Psoas muscle (tissue), 8 donors: ENCODE measurements at regions of chr4 and their contacts with region 1.

Region 1: DNA sequence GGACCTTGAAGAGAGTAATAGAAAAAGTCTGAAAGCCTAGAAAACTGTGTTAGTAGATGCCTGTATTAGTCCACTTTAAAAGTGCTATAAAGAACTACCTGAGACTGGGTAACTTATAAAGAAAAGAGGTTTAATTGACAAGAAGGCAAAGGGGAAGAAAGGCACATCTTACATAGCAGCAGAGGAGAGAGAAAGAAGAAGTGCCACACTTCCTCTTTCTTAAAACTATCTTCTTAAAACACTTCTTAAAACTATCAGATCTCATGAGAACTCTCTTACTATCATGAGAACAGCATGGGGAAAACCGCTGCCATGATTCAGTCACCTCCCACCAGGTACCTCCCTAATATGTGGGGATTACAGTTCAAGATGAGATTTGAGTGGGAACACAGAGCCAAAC is 18.8 kb upstream of the COL25A1 start:
- DNase-seq: no peak
- ATAC-seq: no peak
- H3K4me3 ChIP-seq: no peak overlapping the region
- H3K27ac ChIP-seq: no peak overlapping the region
- H3K4me1 ChIP-seq: no peaks in the 10 kb centered on the region
- H3K27me3 ChIP-seq: peaks cover 0 to 2% (median 0%) of the 10 kb centered on the region in 3 donors
- CTCF ChIP-seq: no peak

Region 2: DNA sequence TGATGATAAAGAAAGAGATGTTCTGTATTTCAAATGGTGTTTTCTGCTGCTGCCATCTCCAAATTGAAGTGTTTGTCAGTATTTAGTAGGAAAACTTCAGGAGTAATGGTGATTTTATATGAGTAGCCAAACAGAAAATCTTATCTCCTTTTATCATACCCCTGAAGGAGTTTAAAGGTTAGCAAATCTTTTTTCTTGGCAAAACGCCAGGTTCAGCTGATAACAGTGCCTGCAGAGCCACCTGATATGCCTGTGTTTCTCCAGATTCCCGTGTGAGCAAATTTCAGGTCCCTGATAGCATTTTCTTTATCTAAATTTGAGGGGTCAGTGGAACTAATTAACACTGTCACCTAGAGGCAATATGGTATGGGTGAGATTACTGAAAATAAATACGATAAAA is 492.6 kb before region 1 on chr4:
- intact Hi-C with region 1: loop called in 1 of 2 experiments (anchors 10 kb)
- DNase-seq: no peak
- ATAC-seq: no peak
- H3K4me3 ChIP-seq: no peak overlapping the region
- H3K27ac ChIP-seq: no peak overlapping the region
- H3K4me1 ChIP-seq: peaks cover 21% of the 10 kb centered on the region
- H3K27me3 ChIP-seq: no peaks in the 10 kb centered on the region
- CTCF ChIP-seq: no peak